ENCODE measurements at regions of chr16 and their contacts with region 1.

Region 1: DNA sequence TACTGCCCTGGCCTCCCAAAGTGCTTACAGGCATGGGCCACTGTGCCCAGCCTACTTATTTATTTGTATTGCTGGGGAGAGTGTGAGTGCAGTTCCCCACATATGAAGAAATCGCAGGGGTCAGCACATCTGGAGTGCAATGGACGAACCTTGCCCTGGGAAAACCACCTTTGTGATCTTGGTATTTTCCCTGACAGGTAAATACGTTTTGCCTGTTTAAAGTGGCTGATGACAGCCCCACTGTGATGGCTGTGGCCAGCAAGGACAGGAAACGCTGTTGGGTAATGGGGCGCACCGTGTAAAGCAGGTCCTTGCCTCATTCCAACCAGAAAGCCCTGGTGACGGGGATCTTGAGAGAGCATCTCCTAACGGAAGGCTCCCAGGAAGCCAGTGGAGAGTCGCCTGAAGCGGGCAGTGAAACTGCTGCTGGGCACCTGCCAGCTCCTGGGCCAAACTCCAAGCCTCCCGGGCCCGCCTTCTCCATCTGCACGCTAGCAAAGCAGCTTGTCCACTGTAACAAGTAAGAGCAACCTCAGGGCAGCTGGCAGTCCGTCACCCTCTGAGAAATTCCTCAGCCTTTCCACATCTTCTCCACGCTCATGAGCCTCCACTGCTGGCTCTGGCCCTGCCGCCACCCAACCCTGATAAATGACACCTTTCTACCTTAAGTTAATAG is 17.5 kb downstream of the EMC8 start:
- DNase-seq: no peak
- H3K4me3 ChIP-seq: no peak overlapping the region
- H3K27ac ChIP-seq: no peak overlapping the region
- H3K4me1 ChIP-seq: no peaks in the 10 kb centered on the region
- CTCF ChIP-seq: no peak

Region 2: DNA sequence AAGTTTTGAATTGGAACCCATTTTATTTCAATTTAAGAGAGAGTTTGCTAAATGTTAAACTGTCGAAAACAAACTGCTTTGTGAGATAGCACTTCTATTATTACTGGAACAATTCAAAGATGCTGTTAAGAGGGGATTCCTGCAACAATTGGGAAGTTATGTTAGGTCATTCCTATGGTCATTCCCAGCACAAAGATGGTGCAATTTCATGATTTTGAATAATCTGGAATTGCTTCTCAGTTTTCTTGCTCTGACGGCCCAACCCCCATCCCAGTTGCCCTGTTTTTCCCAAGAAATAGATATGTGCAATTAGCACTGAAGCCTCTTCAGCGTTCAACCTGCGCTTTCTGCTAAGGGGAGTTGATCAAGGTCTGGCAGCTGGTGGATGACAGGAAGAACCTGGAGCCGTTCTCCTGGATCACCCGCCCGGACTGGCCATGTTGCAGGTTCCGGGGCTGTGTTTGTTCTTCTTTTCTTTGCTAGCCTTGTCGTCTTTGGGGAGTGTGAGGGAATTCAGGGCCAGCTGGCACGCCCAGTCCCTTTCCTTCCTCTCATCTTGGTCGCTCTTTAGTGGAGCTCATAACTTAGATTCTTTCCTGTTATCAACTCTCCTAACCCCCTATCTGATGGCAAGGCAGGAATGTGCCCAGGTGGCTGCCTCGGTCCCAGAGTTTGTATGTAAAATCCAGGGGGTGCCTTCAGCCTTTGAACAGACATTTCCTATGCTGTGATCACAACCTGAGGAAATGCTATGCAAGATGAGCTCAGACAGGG is 88.1 kb after region 1 on chr16:
- CTCF ChIA-PET with region 1: no interaction called
- POLR2A ChIA-PET with region 1: no interaction called
- intact Hi-C with region 1: no loop called
- DNase-seq: no peak
- H3K4me3 ChIP-seq: no peak overlapping the region
- H3K27ac ChIP-seq: no peak overlapping the region
- H3K4me1 ChIP-seq: no peaks in the 10 kb centered on the region
- CTCF ChIP-seq: no peak

Region 3: GRCh38 chr16:86052926-86053325 is 271.1 kb after region 1 on chr16:
- CTCF ChIA-PET with region 1: interaction called, 16 read pairs
- POLR2A ChIA-PET with region 1: no interaction called
- intact Hi-C with region 1: no loop called
- DNase-seq: no peak
- H3K4me3 ChIP-seq: no peak overlapping the region
- H3K27ac ChIP-seq: no peak overlapping the region
- H3K4me1 ChIP-seq: no peaks in the 10 kb centered on the region
- CTCF ChIP-seq: no peak